Activated CD4-positive, alpha-beta T cell treated with anti-CD3 and anti-CD28 coated beads for 36 hours (primary cell): ENCODE measurements at regions of chr15 and their contacts with region 1.

Region 1: DNA sequence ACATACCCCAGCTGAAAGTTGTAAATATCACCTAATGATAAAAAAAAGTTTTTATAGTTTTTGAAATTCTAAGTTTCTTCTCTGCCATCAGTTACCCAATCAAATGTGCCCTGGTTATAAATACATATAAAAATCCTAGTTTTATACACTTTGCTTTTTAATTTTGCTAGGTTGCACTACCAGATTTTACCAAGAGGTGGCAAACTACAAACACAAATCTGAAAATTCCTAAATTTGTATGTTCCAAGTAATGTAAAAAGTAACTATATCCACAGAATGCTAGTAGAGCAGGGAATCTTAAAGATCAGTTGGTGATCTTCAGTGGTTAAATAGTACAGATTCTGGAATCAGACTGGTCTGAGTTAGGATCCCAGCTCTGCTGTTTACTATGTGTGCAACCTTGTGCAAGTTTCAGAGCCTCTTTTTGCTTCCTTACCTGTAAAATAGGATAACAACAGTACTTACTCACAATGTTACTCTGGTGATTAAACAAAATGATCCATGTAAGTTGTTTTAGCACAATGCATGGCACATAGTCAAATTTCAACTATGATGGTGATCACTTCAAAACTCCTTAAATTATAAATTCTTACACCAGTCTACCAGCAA is 11.0 kb downstream of the TRPM7 start:
- DNase-seq: no peak
- ATAC-seq: peak; percentile 26
- H3K4me3 Mint-ChIP-seq: no peak overlapping the region
- H3K27ac Mint-ChIP-seq: peak overlapping the region; percentile 29
- H3K4me1 Mint-ChIP-seq: peaks cover 12% of the 10 kb centered on the region
- H3K27me3 Mint-ChIP-seq: no peaks in the 10 kb centered on the region

Region 2: GRCh38 chr15:50686468-50687301 is 11.0 kb after region 1 on chr15 and contains the start of gene TRPM7:
- CTCF ChIA-PET with region 1: interaction called, 8 read pairs
- POLR2A ChIA-PET with region 1: interaction called, 3 read pairs
- intact Hi-C with region 1: loop called in 1 of 2 experiments (anchors 1 kb)
- DNase-seq: peak; percentile 95
- ATAC-seq: peak; percentile 79
- H3K4me3 Mint-ChIP-seq: peak within 1 kb of the TSS; percentile 99
- H3K27ac Mint-ChIP-seq: peak within 1 kb of the TSS; percentile 97
- H3K4me1 Mint-ChIP-seq: peaks cover 49% of the 10 kb centered on the region
- H3K27me3 Mint-ChIP-seq: no peaks in the 10 kb centered on the region
- total RNA-seq, gene TRPM7: 40.7 to 41.4 TPM

Region 3: DNA sequence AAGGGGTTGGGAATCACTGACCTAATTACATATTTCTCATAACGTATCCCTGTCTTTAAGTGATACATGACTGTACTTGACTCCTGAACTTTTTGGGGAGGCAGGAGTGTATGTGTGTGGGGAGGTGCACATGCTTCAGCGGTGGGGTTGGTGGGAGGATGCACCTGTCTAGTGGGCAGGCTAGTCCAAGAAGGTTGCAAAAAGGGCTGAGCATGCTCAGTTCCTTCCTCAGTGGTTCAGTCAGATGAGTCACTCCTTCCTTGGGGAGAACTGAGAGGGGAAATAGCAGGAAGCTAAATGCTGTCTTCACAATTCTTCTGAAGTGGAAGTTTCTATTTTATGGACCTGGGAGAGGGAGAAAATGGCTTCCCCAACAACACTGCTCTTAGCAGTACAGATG is 208.3 kb after region 1 on chr15:
- CTCF ChIA-PET with region 1: interaction called, 11 read pairs
- POLR2A ChIA-PET with region 1: interaction called, 3 read pairs
- intact Hi-C with region 1: loop called (anchors 1 to 5 kb)
- DNase-seq: peak; percentile 26
- ATAC-seq: no peak
- H3K4me3 Mint-ChIP-seq: no peak overlapping the region
- H3K27ac Mint-ChIP-seq: peak overlapping the region; percentile 37
- H3K4me1 Mint-ChIP-seq: peaks cover 58% of the 10 kb centered on the region
- H3K27me3 Mint-ChIP-seq: no peaks in the 10 kb centered on the region